Transverse colon (tissue), 4 donors: ENCODE measurements at regions of chr5 and their contacts with region 1.

Region 1: GRCh38 chr5:60594715-60595477 is 105.1 kb downstream of the DEPDC1B start:
- DNase-seq: peak; percentile 10
- H3K4me3 ChIP-seq: no peak overlapping the region
- H3K27ac ChIP-seq: peak overlapping the region in 1 of 4 donors; percentile 23
- H3K4me1 ChIP-seq: peaks cover 0 to 18% (median 0%) of the 10 kb centered on the region in 4 donors
- H3K27me3 ChIP-seq: no peaks in the 10 kb centered on the region
- CTCF ChIP-seq: no peak
- EP300 ChIP-seq: no peak
- POLR2A ChIP-seq: no peak

Region 2: DNA sequence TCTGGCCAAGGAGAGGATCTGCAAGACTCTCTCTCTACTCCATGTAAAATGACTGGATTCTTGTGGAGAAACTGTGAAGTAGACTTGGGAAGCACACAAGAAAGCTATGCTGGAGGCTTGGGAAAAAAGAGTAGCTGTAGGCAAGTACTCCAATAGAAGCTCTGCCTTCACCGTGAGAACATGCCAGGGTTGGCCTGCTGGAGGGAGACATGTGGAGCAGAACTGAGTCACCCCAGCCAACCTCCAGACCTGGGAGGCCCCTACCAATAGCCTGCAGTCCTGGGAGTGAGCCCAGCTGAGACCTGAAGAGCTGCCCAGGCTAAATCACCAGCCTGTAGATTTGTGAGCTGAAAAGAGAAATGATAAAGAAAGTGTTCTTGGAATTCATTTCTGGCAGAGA is 38.4 kb after region 1 on chr5:
- in situ Hi-C with region 1: no loop called
- intact Hi-C with region 1: loop called (anchors 1 kb)
- DNase-seq: no peak
- H3K4me3 ChIP-seq: no peak overlapping the region
- H3K27ac ChIP-seq: no peak overlapping the region
- H3K4me1 ChIP-seq: no peaks in the 10 kb centered on the region
- H3K27me3 ChIP-seq: no peaks in the 10 kb centered on the region
- CTCF ChIP-seq: no peak
- EP300 ChIP-seq: no peak
- POLR2A ChIP-seq: no peak